MCF 10A (cell line): ENCODE measurements at regions of chr9 and their contacts with region 1.

Region 1: DNA sequence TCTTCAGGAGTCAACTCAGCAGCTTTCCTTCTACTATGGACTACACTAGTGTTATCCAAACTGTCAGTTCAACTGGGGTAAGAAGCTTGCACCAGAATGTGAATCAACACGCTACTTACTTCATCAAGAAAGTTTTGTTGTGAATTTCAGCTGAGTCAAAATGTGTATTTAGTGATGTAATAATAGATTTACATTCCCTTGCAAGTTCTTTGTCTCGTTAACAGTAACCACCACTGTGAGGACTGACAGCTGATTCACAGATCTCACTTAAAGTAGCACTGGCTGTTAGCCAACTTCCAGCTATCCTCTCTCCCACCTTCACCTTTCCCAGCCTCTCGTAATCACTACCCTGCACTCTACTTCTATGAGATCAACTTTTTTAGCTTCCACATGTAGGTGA is 445.3 kb downstream of the NTRK2 start:
- DNase-seq: peak; percentile 40
- H3K4me3 Mint-ChIP-seq: no peak overlapping the region
- H3K27ac Mint-ChIP-seq: peak overlapping the region; percentile 13
- H3K4me1 Mint-ChIP-seq: peaks cover 35% of the 10 kb centered on the region
- H3K27me3 Mint-ChIP-seq: no peaks in the 10 kb centered on the region
- CTCF ChIP-seq: no peak

Region 2: DNA sequence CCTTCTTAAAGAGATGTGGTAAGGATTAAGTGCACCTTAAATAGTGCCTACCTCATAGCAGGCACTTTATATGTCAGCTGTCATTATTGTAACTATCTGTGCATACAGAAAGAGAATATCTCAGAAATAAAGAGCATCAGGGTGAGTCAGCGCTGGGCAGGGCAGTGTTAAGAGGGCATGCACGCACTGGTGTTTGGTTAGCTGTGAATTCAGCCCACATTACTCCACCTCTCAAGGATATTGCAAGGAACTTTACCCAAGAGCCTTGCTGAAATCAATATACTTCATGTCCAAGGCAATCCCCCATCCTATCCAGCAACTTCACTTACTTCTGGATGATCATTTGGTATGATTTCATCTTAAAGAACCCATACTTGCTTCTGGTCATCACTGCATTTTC is 144.4 kb before region 1 on chr9:
- CTCF ChIA-PET with region 1: no interaction called
- POLR2A ChIA-PET with region 1: no interaction called
- intact Hi-C with region 1: loop called (anchors 10 kb)
- DNase-seq: peak; percentile 83
- H3K4me3 Mint-ChIP-seq: no peak overlapping the region
- H3K27ac Mint-ChIP-seq: peak overlapping the region; percentile 37
- H3K4me1 Mint-ChIP-seq: peaks cover 28% of the 10 kb centered on the region
- H3K27me3 Mint-ChIP-seq: no peaks in the 10 kb centered on the region
- CTCF ChIP-seq: no peak

Region 3: DNA sequence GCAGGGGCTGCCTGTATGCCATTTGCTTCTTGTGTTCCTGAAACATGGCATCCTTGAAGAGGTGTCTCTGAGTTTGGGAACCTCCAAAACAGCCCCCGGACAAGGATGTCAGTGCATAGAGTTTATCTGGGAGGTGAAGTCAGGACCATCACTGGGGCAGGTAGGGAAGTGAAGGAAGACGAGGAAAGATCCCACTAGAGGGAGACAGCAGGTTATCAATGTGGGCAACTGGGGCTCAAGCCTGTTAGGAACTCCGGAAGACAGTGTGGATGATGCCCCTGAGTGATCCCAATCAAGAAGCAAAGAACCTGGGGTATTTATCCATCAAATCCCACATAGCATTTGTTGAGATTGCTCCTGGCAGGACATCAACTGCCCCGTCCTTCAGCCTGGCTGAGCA is 393.8 kb after region 1 on chr9:
- CTCF ChIA-PET with region 1: no interaction called
- POLR2A ChIA-PET with region 1: no interaction called
- intact Hi-C with region 1: loop called (anchors 10 kb)
- DNase-seq: peak; percentile 59
- H3K4me3 Mint-ChIP-seq: no peak overlapping the region
- H3K27ac Mint-ChIP-seq: no peak overlapping the region
- H3K4me1 Mint-ChIP-seq: peaks cover 14% of the 10 kb centered on the region
- H3K27me3 Mint-ChIP-seq: peaks cover 35% of the 10 kb centered on the region
- CTCF ChIP-seq: no peak